Activated CD4-positive, alpha-beta T cell treated with anti-CD3 and anti-CD28 coated beads for 36 hours (primary cell): ENCODE measurements at regions of chr5 and their contacts with region 1.

Region 1: GRCh38 chr5:923281-923873 is 30.7 kb downstream of the TRIP13 start:
- DNase-seq: peak; percentile 87
- ATAC-seq: peak; percentile 88
- H3K4me3 Mint-ChIP-seq: no peak overlapping the region
- H3K27ac Mint-ChIP-seq: no peak overlapping the region
- H3K4me1 Mint-ChIP-seq: peaks cover 26% of the 10 kb centered on the region
- H3K27me3 Mint-ChIP-seq: peaks cover 25% of the 10 kb centered on the region

Region 2: GRCh38 chr5:912280-913091 is 10.9 kb before region 1 on chr5:
- CTCF ChIA-PET with region 1: interaction called, 3 read pairs
- POLR2A ChIA-PET with region 1: no interaction called
- intact Hi-C with region 1: loop called in 1 of 2 experiments (anchors 1 kb)
- DNase-seq: peak; percentile 88
- ATAC-seq: peak; percentile 95
- H3K4me3 Mint-ChIP-seq: no peak overlapping the region
- H3K27ac Mint-ChIP-seq: peak overlapping the region; percentile 71
- H3K4me1 Mint-ChIP-seq: peaks cover 13% of the 10 kb centered on the region
- H3K27me3 Mint-ChIP-seq: no peaks in the 10 kb centered on the region

Region 3: GRCh38 chr5:1011226-1011631 is 87.9 kb after region 1 on chr5:
- CTCF ChIA-PET with region 1: interaction called, 8 read pairs
- POLR2A ChIA-PET with region 1: no interaction called
- intact Hi-C with region 1: loop called (anchors 1 to 5 kb)
- DNase-seq: peak; percentile 80
- ATAC-seq: peak; percentile 64
- H3K4me3 Mint-ChIP-seq: no peak overlapping the region
- H3K27ac Mint-ChIP-seq: no peak overlapping the region
- H3K4me1 Mint-ChIP-seq: peaks cover 3% of the 10 kb centered on the region
- H3K27me3 Mint-ChIP-seq: peaks cover 39% of the 10 kb centered on the region

Region 4: DNA sequence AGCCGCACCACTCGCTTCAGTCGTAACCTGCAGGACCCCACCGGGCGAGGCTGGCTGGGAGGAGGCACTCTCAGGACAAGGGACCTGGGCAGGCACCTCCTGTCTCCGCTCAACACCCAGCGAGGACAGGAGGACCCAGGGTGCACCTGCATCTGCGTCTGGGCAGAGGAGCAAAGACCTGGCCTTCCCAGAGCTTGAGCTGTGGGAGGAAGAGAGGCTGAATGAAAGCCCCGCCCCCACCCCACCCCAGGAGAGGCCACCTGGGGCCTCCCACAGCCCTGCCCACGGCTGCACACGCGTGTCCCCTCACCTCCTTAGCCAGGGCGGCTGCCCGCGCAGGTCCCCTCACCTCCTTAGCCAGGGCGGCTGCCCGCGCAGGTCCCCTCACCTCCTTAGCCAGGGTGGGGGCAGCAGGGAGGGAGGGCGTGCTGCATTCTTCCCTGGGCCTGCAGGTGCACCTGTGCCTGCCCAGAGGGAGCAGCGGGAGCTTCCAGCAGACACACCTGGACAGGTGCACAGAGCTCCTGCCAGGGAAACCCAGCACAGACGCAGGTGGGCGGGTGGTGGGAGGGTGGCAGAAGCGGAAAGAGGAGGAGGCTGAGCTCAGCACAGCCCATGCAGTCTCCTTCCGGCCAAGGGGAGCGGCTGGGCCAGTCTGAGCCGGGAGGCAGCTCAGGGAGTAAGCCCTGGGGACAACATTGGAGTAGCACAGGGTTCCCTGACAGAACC is 207.0 kb after region 1 on chr5:
- CTCF ChIA-PET with region 1: no interaction called
- POLR2A ChIA-PET with region 1: no interaction called
- intact Hi-C with region 1: no loop called
- DNase-seq: no peak
- ATAC-seq: no peak
- H3K4me3 Mint-ChIP-seq: no peak overlapping the region
- H3K27ac Mint-ChIP-seq: no peak overlapping the region
- H3K4me1 Mint-ChIP-seq: no peaks in the 10 kb centered on the region
- H3K27me3 Mint-ChIP-seq: no peaks in the 10 kb centered on the region

Region 5: GRCh38 chr5:1174122-1174936 is 251.0 kb after region 1 on chr5:
- CTCF ChIA-PET with region 1: interaction called, 5 read pairs
- POLR2A ChIA-PET with region 1: no interaction called
- intact Hi-C with region 1: loop called (anchors 1 to 2 kb)
- DNase-seq: peak; percentile 80
- ATAC-seq: peak; percentile 80
- H3K4me3 Mint-ChIP-seq: no peak overlapping the region
- H3K27ac Mint-ChIP-seq: no peak overlapping the region
- H3K4me1 Mint-ChIP-seq: no peaks in the 10 kb centered on the region
- H3K27me3 Mint-ChIP-seq: no peaks in the 10 kb centered on the region